ENCODE measurements at regions of chr2 and their contacts with region 1.

Region 1: DNA sequence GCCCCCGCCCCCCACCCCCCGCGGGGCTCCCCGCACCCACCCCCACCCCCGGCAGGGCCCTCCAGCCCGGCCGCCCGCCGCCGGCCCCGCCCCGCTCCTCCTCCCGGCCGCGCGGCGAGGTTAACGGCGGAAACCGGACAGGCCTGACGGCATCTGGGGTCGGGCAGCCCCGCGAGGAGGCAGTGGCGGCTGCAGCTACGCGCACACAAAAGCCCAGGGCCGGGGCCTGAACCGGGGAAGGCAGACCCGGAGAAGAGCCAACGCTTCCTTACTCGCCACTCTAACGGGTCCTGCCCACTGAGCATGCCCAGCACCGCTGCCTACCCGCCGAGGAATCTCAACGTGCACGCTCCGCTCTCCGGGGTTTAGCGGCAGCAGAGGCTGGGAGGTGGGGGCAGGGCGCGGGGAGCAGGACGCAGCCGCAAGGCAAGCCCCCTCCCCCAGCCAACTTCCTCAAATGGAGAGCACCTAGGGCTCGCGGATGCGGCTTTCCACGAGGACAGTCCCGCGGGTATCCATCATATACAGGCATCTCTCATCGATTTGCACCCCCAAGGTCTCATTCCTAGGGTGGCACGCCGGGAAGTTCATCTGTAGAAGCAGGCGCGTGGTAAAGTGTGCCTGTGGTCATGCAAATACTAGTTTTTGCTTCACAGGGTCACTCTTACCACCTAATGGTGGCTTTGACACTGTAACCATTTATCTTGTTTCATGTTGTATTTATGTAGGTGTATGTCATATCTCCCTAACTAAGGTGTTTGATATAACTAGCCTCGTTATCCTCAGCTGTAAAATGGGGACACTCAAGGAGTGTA is at the start of gene MEMO1:
- DNase-seq: peak; percentile 97 to 98
- ATAC-seq: peak; percentile 78 to 84
- H3K4me3 ChIP-seq: peak within 1 kb of the TSS; percentile 96
- H3K27ac ChIP-seq: peak within 1 kb of the TSS; percentile 97 to 99
- H3K4me1 ChIP-seq: peaks cover 37% of the 10 kb centered on the region
- CTCF ChIP-seq: no peak
- EP300 ChIP-seq: peak in 1 of 2 experiments; percentile 5; a peak in 1 of 5 replicates
- POLR2A ChIP-seq: peak; percentile 79
- RAD21 ChIP-seq: peak; percentile 19 to 44; a peak in 4 of 5 replicates
- polyA plus RNA-seq, gene MEMO1: 72.9 and 87.0 TPM in 2 replicates

Region 2: GRCh38 chr2:30721668-30722647 is 1288.9 kb before region 1 on chr2:
- CTCF ChIA-PET with region 1: no interaction called
- POLR2A ChIA-PET with region 1: no interaction called
- DNase-seq: no peak
- ATAC-seq: peak in 1 of 2 experiments; percentile 13; a peak in 1 of 6 replicates
- H3K4me3 ChIP-seq: no peak overlapping the region
- H3K27ac ChIP-seq: no peak overlapping the region
- H3K4me1 ChIP-seq: no peaks in the 10 kb centered on the region
- CTCF ChIP-seq: no peak
- EP300 ChIP-seq: no peak
- POLR2A ChIP-seq: no peak
- RAD21 ChIP-seq: no peak

Region 3: GRCh38 chr2:31957354-31958139 is 53.3 kb before region 1 on chr2:
- CTCF ChIA-PET with region 1: no interaction called
- POLR2A ChIA-PET with region 1: no interaction called
- DNase-seq: no peak
- ATAC-seq: no peak
- H3K4me3 ChIP-seq: no peak overlapping the region
- H3K27ac ChIP-seq: no peak overlapping the region
- H3K4me1 ChIP-seq: peaks cover 13% of the 10 kb centered on the region
- CTCF ChIP-seq: no peak
- EP300 ChIP-seq: no peak
- POLR2A ChIP-seq: no peak
- RAD21 ChIP-seq: no peak

Region 4: GRCh38 chr2:31997653-31998052 is 13.2 kb before region 1 on chr2:
- CTCF ChIA-PET with region 1: interaction called, 10 read pairs
- POLR2A ChIA-PET with region 1: interaction called, 3 read pairs
- DNase-seq: no peak
- ATAC-seq: peak in 1 of 2 experiments; percentile 30; a peak in 1 of 6 replicates
- H3K4me3 ChIP-seq: no peak overlapping the region
- H3K27ac ChIP-seq: no peak overlapping the region
- H3K4me1 ChIP-seq: peaks cover 11% of the 10 kb centered on the region; the same call in 2 of the 3 replicates
- CTCF ChIP-seq: no peak
- EP300 ChIP-seq: no peak
- POLR2A ChIP-seq: no peak
- RAD21 ChIP-seq: no peak

Region 5: DNA sequence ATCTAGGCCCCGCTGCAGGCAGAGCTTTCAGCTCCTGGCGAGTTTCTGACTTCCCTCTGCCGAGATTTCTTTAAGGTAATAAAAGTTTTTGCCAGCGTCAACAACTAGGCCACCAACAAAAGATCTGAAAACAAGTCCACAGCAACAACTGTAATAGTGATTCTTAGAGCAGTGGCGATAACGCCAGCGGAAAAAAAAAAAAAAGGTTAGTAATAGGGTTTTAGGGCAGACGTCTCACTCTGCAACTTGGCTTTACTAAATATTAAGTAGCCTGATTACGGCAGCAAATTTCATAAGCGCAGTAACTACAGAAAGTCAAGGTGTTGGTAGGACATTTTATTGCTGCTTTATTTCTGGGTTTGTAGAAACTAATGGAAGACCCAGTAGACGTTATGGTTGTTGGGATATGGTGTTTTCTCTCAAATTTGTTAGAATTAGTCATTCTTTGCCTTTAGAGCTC is 155.3 kb after region 1 on chr2:
- CTCF ChIA-PET with region 1: no interaction called
- POLR2A ChIA-PET with region 1: interaction called, 10 read pairs
- DNase-seq: no peak
- ATAC-seq: no peak
- H3K4me3 ChIP-seq: peak overlapping the region; percentile 75
- H3K27ac ChIP-seq: peak overlapping the region; percentile 82 to 89
- H3K4me1 ChIP-seq: peaks cover 8% of the 10 kb centered on the region
- CTCF ChIP-seq: no peak
- EP300 ChIP-seq: no peak
- POLR2A ChIP-seq: no peak
- RAD21 ChIP-seq: no peak